PC-3 (cell line): ENCODE measurements at regions of chr12 and their contacts with region 1.

Region 1: DNA sequence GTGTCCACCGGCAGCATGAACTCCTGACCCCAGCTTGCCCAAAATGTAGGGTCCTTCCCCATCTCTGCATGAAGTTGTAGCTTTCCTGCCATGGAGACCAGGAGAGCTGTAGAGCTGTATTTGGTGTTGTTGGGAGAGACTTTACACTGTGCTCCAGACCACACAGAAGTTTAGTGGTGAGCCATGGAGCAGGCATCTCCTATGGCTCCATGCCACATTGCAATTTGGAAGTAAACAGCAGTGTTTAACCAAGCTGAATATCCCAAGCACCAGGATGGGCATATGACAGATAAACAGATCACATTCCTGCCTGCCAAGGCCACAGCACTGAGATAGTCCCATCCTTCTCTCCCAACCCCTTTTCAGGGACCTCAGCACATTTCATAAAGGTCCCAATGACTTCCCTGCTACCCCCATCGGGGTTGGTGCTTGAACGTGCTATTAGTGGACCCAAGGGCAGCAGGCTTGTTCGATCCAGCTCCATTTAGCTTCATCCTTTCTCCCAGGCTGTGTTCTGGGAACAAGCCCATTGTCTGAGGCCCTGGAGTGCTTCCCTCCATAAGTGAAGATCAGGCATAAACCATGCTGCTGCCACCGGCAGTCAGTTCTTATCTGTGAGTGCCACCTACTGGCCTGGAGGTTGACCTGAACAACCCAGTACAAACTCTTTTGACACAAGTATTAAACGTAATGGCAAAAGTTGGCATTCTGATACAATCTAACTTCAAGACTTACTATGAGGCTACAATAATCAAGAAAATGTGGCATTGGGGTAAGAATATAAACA is 172.3 kb upstream of the ATXN7L3B start:
- DNase-seq: peak; percentile 71
- ATAC-seq: peak; percentile 88
- H3K4me3 ChIP-seq: no peak overlapping the region
- H3K27ac ChIP-seq: no peak overlapping the region
- H3K4me1 ChIP-seq: no peaks in the 10 kb centered on the region; the same call in 1 of the 2 replicates
- H3K27me3 ChIP-seq: no peaks in the 10 kb centered on the region
- CTCF ChIP-seq: peak; percentile 91

Region 2: GRCh38 chr12:74111688-74112360 is 253.5 kb before region 1 on chr12:
- CTCF ChIA-PET with region 1: no interaction called
- POLR2A ChIA-PET with region 1: no interaction called
- intact Hi-C with region 1: loop called (anchors 1 kb)
- DNase-seq: peak; percentile 58
- ATAC-seq: peak; percentile 70
- H3K4me3 ChIP-seq: no peak overlapping the region
- H3K27ac ChIP-seq: no peak overlapping the region
- H3K4me1 ChIP-seq: no peaks in the 10 kb centered on the region
- H3K27me3 ChIP-seq: no peaks in the 10 kb centered on the region
- CTCF ChIP-seq: peak; percentile 76